Calu3 (cell line): ENCODE measurements at regions of chr19 and their contacts with region 1.

Region 1: DNA sequence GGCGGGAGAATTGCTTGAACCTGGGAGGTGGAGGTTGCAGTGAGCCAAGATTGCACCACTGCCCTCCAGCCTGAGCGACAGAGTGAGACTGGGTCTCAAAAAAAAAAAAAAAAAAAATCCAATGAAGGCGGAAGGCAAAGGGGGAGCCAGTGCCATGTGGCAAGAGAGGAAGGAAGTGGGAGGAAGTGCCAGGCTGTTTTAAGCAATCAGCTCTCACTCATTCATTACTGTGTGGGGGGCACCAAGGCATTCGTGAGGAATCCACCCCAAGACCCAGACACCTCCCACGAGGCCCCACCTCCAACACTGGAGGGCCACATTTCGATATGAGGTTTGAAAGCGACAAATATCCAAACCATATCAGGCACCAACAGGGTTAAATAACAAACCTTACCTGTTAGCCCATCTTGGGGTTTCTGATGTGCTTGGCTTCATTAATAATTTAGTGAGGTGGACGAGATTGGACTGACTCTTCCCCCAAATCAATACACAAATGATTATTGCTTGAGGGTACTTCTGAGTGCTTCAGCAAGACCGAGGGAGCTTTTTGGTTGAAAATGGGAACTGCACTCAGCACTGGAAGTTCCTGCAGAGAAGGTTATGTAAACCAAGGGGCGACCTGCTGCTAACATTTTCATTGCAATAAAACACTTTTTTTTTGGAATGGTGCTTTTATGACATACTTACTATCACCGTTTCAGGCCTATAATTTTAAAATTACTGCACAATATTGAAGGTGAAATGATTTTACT is 7.5 kb upstream of the LRP3 start:
- DNase-seq: no peak
- H3K4me3 Mint-ChIP-seq: no peak overlapping the region
- H3K27ac Mint-ChIP-seq: no peak overlapping the region
- H3K4me1 Mint-ChIP-seq: no peaks in the 10 kb centered on the region
- H3K27me3 Mint-ChIP-seq: peaks cover 26% of the 10 kb centered on the region
- CTCF ChIP-seq: no peak

Region 2: DNA sequence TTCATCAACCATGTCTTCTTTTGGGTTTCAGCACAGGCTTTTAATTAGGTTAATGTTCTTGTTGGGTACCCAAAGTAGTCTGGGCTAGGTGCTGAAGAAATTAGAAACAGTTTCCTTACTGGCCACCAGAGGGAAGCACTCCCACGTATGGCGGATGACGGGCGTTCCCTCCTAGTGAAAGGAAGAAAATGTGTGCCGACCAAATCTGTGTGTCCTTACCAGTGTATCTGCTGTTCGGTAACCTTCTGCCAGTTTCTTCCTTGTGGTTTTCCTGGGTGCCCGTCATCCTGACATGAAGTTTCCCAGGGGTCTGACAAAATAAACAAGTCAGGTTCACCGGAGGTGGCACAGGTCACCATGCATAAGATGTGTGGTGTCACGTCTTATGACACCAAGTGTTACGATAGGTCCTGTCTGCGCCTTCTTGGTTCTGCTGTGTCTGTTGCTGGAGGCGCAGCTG is 60.6 kb before region 1 on chr19:
- CTCF ChIA-PET with region 1: interaction called, 13 read pairs
- intact Hi-C with region 1: loop called (anchors 1 kb)
- DNase-seq: peak; percentile 64
- H3K4me3 Mint-ChIP-seq: no peak overlapping the region
- H3K27ac Mint-ChIP-seq: no peak overlapping the region
- H3K4me1 Mint-ChIP-seq: no peaks in the 10 kb centered on the region
- H3K27me3 Mint-ChIP-seq: no peaks in the 10 kb centered on the region
- CTCF ChIP-seq: peak; percentile 82

Region 3: DNA sequence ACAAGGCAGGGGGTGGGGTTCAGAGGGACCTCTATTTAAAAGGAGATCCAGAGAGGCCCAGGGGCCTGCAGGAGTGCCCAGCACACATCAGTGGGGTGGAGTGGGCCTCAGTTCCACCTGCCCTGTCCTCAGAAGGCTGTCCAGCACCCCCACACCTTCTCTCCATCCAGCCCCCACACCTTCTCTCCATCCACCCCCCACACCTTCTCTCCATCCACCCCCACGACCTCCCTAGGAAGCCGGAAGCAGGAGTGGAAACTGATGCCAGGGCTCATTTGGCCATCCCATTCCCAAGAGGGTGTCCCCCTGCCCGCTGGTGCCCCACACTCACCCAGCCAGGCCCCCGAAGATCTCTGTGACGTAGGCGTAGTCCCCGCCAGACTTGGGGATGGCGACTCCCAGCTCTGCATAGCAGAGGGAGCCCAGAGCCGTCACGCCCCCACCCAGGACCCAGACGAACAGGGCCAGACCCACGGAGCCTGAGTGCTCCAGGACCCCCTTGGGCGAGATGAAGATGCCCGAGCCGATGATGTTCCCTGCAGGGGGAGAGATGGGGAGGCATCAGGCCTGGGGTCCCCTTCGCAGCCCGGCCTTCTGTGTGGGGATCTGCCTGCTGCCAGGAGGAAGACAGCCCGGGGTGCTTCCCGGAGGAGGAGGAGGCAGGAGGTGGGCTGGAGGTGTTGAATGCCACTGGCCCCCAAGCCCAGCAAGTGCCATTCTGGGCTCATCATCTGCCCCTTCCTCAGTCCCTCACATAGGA is 29.0 kb after region 1 on chr19:
- CTCF ChIA-PET with region 1: no interaction called
- intact Hi-C with region 1: no loop called
- DNase-seq: no peak
- H3K4me3 Mint-ChIP-seq: no peak overlapping the region
- H3K27ac Mint-ChIP-seq: no peak overlapping the region
- H3K4me1 Mint-ChIP-seq: peaks cover 7% of the 10 kb centered on the region
- H3K27me3 Mint-ChIP-seq: peaks cover 74% of the 10 kb centered on the region
- CTCF ChIP-seq: no peak

Region 4: GRCh38 chr19:33226550-33227241 is 40.1 kb after region 1 on chr19:
- CTCF ChIA-PET with region 1: no interaction called
- intact Hi-C with region 1: no loop called
- DNase-seq: no peak
- H3K4me3 Mint-ChIP-seq: no peak overlapping the region
- H3K27ac Mint-ChIP-seq: no peak overlapping the region
- H3K4me1 Mint-ChIP-seq: no peaks in the 10 kb centered on the region
- H3K27me3 Mint-ChIP-seq: peaks cover 89% of the 10 kb centered on the region
- CTCF ChIP-seq: no peak